Prostate gland (tissue), 2 donors: ENCODE measurements at regions of chr3 and their contacts with region 1.

Region 1: DNA sequence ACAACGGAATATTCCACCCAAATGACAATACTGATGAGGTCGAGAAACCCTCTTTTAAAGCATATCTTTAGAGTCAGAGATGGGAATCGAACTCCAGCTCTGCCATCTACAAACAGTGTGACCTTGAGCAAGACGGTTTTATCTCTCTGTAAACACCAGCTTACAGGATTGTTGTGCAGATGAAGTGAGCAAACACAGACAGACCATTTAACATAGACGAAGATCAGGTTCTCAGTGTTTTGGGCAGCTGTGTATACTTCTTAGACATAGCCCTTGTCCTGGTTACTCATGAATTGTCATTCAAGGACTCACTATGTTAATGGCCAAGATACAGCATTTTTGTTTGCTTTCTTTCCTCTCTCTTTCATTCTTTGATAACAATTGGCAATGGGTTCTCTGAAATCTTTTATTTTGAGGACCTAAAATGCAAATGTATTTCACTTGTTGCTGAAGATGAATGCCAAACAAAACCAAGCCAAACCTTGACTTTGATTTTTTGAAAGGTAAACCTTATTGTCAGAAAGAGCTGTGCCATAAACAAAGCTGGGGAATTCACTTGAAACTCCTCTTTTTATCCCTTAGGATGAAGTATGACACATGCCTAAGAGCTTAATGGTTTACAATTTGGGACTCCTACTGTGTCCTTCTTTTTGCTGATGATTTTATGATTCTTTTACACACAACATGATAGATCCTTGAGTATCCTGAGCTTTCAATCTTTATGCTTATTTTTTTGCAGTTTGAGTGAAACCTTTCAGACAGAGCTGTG is 250.0 kb upstream of the PDZRN3 start:
- DNase-seq: no peak
- H3K4me3 ChIP-seq: no peak overlapping the region
- H3K27ac ChIP-seq: no peak overlapping the region
- H3K4me1 ChIP-seq: no peaks in the 10 kb centered on the region
- H3K27me3 ChIP-seq: no peaks in the 10 kb centered on the region
- CTCF ChIP-seq: no peak
- POLR2A ChIP-seq: no peak

Region 2: DNA sequence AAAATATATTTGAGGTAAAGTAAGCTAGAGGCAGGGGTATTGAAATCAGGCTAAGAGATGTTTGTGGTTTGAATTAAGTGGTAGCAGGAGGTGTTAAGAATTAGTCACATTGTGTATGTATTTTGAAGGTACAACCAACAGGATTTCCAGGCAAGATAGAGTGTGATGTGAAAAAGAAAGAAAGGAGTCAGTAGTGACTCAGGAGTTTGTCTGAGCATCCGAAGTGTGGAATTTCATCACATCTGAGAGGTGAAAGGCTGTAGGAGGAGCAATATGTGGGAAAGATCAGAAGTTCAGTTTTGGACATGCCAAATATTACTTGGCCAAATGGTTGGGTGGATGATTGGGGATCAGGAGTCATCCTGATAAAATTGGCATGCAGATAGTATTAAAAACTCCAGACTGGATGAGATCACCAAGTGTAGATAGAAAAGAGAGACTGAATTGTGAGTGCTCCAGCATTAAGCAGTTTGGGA is 845.4 kb before region 1 on chr3:
- intact Hi-C with region 1: no loop called
- DNase-seq: no peak
- H3K4me3 ChIP-seq: no peak overlapping the region
- H3K27ac ChIP-seq: no peak overlapping the region
- H3K4me1 ChIP-seq: no peaks in the 10 kb centered on the region
- H3K27me3 ChIP-seq: no peaks in the 10 kb centered on the region
- CTCF ChIP-seq: no peak
- POLR2A ChIP-seq: no peak

Region 3: GRCh38 chr3:74624301-74624700 is 749.5 kb after region 1 on chr3:
- intact Hi-C with region 1: loop called (anchors 10 kb)
- DNase-seq: no peak
- H3K4me3 ChIP-seq: no peak overlapping the region
- H3K27ac ChIP-seq: no peak overlapping the region
- H3K4me1 ChIP-seq: no peaks in the 10 kb centered on the region
- H3K27me3 ChIP-seq: no peaks in the 10 kb centered on the region
- CTCF ChIP-seq: no peak
- POLR2A ChIP-seq: no peak

Region 4: DNA sequence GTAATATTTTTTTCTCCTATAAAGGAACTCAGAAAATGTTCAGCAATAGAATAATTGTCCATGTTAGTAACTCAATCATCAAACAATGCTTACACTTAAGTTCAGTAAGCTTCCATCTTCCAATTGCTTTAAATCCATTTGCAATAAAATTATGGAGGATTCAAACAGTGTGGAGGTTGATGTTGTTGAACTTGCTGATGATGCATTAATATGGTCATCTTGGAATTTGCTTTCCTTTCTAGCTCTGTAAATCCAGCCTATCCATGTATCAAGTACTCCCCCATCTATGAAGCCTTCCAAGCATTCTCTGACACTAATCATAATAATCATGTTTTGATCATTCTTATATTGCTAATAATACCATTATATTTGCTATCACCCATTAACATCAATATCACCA is 1118.1 kb after region 1 on chr3:
- intact Hi-C with region 1: loop called (anchors 10 kb)
- DNase-seq: no peak
- H3K4me3 ChIP-seq: no peak overlapping the region
- H3K27ac ChIP-seq: no peak overlapping the region
- H3K4me1 ChIP-seq: no peaks in the 10 kb centered on the region
- H3K27me3 ChIP-seq: no peaks in the 10 kb centered on the region
- CTCF ChIP-seq: no peak
- POLR2A ChIP-seq: no peak